Dorsolateral prefrontal cortex (tissue), 120 donors: ENCODE measurements at regions of chr9 and their contacts with region 1.

Region 1: GRCh38 chr9:15422372-15423230 is at the start of gene SNAPC3:
- DNase-seq: peak; percentile 90 to 98 (median 95)
- H3K4me3 ChIP-seq: peak within 1 kb of the TSS; percentile 73 to 99 (median 91)
- H3K27ac ChIP-seq: peak within 1 kb of the TSS; percentile 72 to 99 (median 94)
- H3K27me3 ChIP-seq: no peaks in the 10 kb centered on the region
- CTCF ChIP-seq: peak in 39 of 56 donors; percentile 8 to 61 (median 36)
- total RNA-seq, gene SNAPC3: 39.2 to 70.3 (median 53.8) TPM

Region 2: DNA sequence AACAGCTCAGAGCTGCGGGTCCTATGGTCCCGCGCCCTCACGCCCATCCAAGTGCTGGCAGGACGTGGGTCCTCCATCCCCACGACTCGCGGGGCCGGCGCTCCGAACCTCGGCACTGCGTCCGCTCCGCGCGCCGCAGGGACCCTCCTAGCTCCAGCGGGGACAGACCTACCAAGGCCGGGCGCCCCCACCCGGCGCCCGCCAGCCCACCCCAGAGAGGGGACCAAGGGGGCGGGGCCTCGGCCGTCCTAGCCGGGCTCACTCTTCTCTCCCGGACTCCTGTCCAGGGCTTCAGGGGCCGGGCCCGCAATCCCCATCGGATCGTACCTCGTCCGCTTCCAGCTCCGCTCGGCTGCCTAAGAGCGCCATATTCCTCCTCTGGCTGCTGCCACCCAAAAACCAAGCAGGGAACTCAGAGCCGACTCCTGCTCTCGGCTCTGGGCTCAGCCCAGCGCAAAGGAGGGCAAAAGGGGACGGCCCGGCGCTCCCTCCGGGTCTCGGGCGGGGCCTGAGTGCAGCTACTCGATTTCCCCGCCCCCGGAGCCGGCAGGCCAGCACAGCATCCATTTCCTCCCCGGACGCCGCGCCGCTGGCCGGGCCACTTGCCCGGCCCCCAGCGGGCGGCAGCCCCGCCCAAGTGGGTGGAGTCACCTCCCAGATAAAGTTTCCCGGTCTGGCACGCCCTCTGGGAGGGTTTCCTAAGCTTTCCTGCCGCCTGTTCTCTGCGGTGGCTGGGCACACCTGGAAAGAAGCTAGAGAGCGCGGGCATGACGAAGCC is 115.7 kb before region 1 on chr9 and contains the start of gene TTC39B:
- intact Hi-C with region 1: loop called (anchors 5 kb)
- DNase-seq: peak; percentile 51 to 88 (median 78)
- H3K4me3 ChIP-seq: peak within 1 kb of the TSS; percentile 65 to 97 (median 86)
- H3K27ac ChIP-seq: peak within 1 kb of the TSS in 46 of 59 donors; percentile 4 to 90 (median 59)
- H3K27me3 ChIP-seq: peaks cover 0 to 3% (median 0%) of the 10 kb centered on the region in 45 donors
- CTCF ChIP-seq: peak in 32 of 56 donors; percentile 8 to 53 (median 30)
- total RNA-seq, gene TTC39B: 10.3 to 47.0 (median 26.9) TPM

Region 3: GRCh38 chr9:15510789-15511575 is 88.4 kb after region 1 on chr9 and contains the start of gene PSIP1:
- intact Hi-C with region 1: loop called (anchors 5 kb)
- DNase-seq: peak; percentile 59 to 85 (median 76)
- H3K4me3 ChIP-seq: peak within 1 kb of the TSS; percentile 64 to 100 (median 94)
- H3K27ac ChIP-seq: peak within 1 kb of the TSS; percentile 70 to 100 (median 98)
- H3K27me3 ChIP-seq: no peaks in the 10 kb centered on the region
- CTCF ChIP-seq: peak in 26 of 56 donors; percentile 5 to 39 (median 22)
- total RNA-seq, gene PSIP1: 113 to 233 (median 182) TPM